ENCODE measurements at regions of chr13 and their contacts with region 1.

Region 1: GRCh38 chr13:46575301-46575771 is 22.4 kb downstream of the LRCH1 start:
- DNase-seq: peak; percentile 46
- H3K4me3 ChIP-seq: no peak overlapping the region
- H3K27ac ChIP-seq: peak overlapping the region; percentile 22
- H3K27me3 ChIP-seq: no peaks in the 10 kb centered on the region
- CTCF ChIP-seq: no peak

Region 2: GRCh38 chr13:46622630-46623256 is 47.4 kb after region 1 on chr13:
- CTCF ChIA-PET with region 1: no interaction called
- POLR2A ChIA-PET with region 1: interaction called, 11 read pairs
- DNase-seq: peak; percentile 60
- H3K4me3 ChIP-seq: no peak overlapping the region
- H3K27ac ChIP-seq: no peak overlapping the region
- H3K27me3 ChIP-seq: no peaks in the 10 kb centered on the region
- CTCF ChIP-seq: no peak

Region 3: GRCh38 chr13:48078251-48078656 is 1502.9 kb after region 1 on chr13:
- CTCF ChIA-PET with region 1: no interaction called
- POLR2A ChIA-PET with region 1: no interaction called
- DNase-seq: no peak
- H3K4me3 ChIP-seq: no peak overlapping the region
- H3K27ac ChIP-seq: no peak overlapping the region
- H3K27me3 ChIP-seq: no peaks in the 10 kb centered on the region
- CTCF ChIP-seq: peak; percentile 8; the same call in 1 of the 2 replicates